ENCODE measurements at regions of chr7 and their contacts with region 1.

Region 1: GRCh38 chr7:151123822-151124464 is 37.7 kb downstream of the AGAP3 start:
- DNase-seq: peak; percentile 85
- H3K4me3 ChIP-seq: no peak overlapping the region
- H3K27ac ChIP-seq: no peak overlapping the region
- H3K4me1 ChIP-seq: peaks cover 11% of the 10 kb centered on the region
- H3K27me3 ChIP-seq: no peaks in the 10 kb centered on the region
- CTCF ChIP-seq: peak; percentile 99

Region 2: GRCh38 chr7:151172273-151173141 is 48.6 kb after region 1 on chr7:
- CTCF ChIA-PET with region 1: interaction called, 5 read pairs
- POLR2A ChIA-PET with region 1: no interaction called
- intact Hi-C with region 1: loop called (anchors 1 kb)
- DNase-seq: peak; percentile 79
- H3K4me3 ChIP-seq: no peak overlapping the region
- H3K27ac ChIP-seq: no peak overlapping the region
- H3K4me1 ChIP-seq: peaks cover 4% of the 10 kb centered on the region
- H3K27me3 ChIP-seq: peaks cover 27% of the 10 kb centered on the region
- CTCF ChIP-seq: peak; percentile 100

Region 3: GRCh38 chr7:151226875-151227782 is 103.2 kb after region 1 on chr7 and contains the start of gene ABCF2:
- CTCF ChIA-PET with region 1: no interaction called
- POLR2A ChIA-PET with region 1: no interaction called
- intact Hi-C with region 1: loop called (anchors 5 kb)
- DNase-seq: peak; percentile 100
- H3K4me3 ChIP-seq: peak within 1 kb of the TSS; percentile 81
- H3K27ac ChIP-seq: peak within 1 kb of the TSS; percentile 74
- H3K4me1 ChIP-seq: peaks cover 12% of the 10 kb centered on the region
- H3K27me3 ChIP-seq: no peaks in the 10 kb centered on the region
- CTCF ChIP-seq: no peak
- total RNA-seq, gene ABCF2: 65.5 and 69.0 TPM in 2 replicates

Measured in A673 (cell line).